Mucosa of descending colon (tissue), 3 donors: ENCODE measurements at regions of chr4 and their contacts with region 1.

Region 1: GRCh38 chr4:68673143-68673542 is 2.7 kb upstream of the UGT2B15 start:
- DNase-seq: no peak
- ATAC-seq: no peak
- H3K4me3 ChIP-seq: no peak overlapping the region
- H3K4me1 ChIP-seq: no peaks in the 10 kb centered on the region
- CTCF ChIP-seq: no peak

Region 2: GRCh38 chr4:68569466-68570121 is 103.5 kb before region 1 on chr4:
- intact Hi-C with region 1: loop called in 1 of 2 experiments (anchors 5 kb)
- DNase-seq: peak in 2 of 3 donors; percentile 36 to 53
- ATAC-seq: peak; percentile 21
- H3K4me3 ChIP-seq: no peak overlapping the region
- H3K4me1 ChIP-seq: peaks cover 15% of the 10 kb centered on the region
- CTCF ChIP-seq: no peak